Activated CD4-positive, alpha-beta T cell treated with anti-CD3 and anti-CD28 coated beads for 36 hours (primary cell): ENCODE measurements at regions of chr1 and their contacts with region 1.

Region 1: GRCh38 chr1:112715264-112716053 is at the start of gene PPM1J:
- DNase-seq: peak; percentile 97
- ATAC-seq: peak; percentile 84
- H3K4me3 Mint-ChIP-seq: peak within 1 kb of the TSS; percentile 74
- H3K27ac Mint-ChIP-seq: no peak within 1 kb of the TSS
- H3K4me1 Mint-ChIP-seq: peaks cover 14% of the 10 kb centered on the region
- H3K27me3 Mint-ChIP-seq: peaks cover 18% of the 10 kb centered on the region
- total RNA-seq, gene PPM1J: 0.75 to 0.88 TPM

Region 2: DNA sequence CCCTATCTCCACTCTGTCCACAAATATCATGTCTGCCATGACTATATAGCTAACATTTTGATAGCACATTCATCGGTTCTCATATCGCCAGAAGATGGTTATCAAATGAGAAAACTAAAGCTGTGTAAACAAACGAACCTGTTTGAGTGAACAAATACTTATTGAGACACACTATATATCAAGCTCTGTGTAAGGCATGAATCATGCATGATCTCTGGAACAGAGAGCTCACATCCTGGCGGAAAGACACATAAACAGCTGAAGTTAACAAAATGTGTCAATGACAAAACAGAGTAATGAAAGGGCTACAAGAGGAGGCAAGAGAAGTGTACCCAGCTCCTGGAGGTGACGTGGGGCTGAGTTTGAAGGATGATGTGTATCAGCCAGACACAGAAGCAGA is 739.1 kb before region 1 on chr1:
- CTCF ChIA-PET with region 1: no interaction called
- POLR2A ChIA-PET with region 1: no interaction called
- intact Hi-C with region 1: no loop called
- DNase-seq: no peak
- ATAC-seq: no peak
- H3K4me3 Mint-ChIP-seq: no peak overlapping the region
- H3K27ac Mint-ChIP-seq: no peak overlapping the region
- H3K4me1 Mint-ChIP-seq: no peaks in the 10 kb centered on the region
- H3K27me3 Mint-ChIP-seq: peaks cover 53% of the 10 kb centered on the region

Region 3: GRCh38 chr1:112325504-112325903 is 390.0 kb before region 1 on chr1:
- CTCF ChIA-PET with region 1: no interaction called
- POLR2A ChIA-PET with region 1: no interaction called
- intact Hi-C with region 1: no loop called
- DNase-seq: no peak
- ATAC-seq: no peak
- H3K4me3 Mint-ChIP-seq: no peak overlapping the region
- H3K27ac Mint-ChIP-seq: no peak overlapping the region
- H3K4me1 Mint-ChIP-seq: no peaks in the 10 kb centered on the region
- H3K27me3 Mint-ChIP-seq: peaks cover 9% of the 10 kb centered on the region

Region 4: GRCh38 chr1:112674439-112674985 is 40.9 kb before region 1 on chr1 and contains the start of gene MOV10:
- CTCF ChIA-PET with region 1: interaction called, 4 read pairs
- POLR2A ChIA-PET with region 1: no interaction called
- intact Hi-C with region 1: loop called in 1 of 2 experiments (anchors 2 kb)
- DNase-seq: peak; percentile 77
- ATAC-seq: peak; percentile 83
- H3K4me3 Mint-ChIP-seq: peak within 1 kb of the TSS; percentile 88
- H3K27ac Mint-ChIP-seq: peak within 1 kb of the TSS; percentile 92
- H3K4me1 Mint-ChIP-seq: peaks cover 43% of the 10 kb centered on the region
- H3K27me3 Mint-ChIP-seq: no peaks in the 10 kb centered on the region
- total RNA-seq, gene MOV10: 80.3 to 87.5 TPM

Region 5: DNA sequence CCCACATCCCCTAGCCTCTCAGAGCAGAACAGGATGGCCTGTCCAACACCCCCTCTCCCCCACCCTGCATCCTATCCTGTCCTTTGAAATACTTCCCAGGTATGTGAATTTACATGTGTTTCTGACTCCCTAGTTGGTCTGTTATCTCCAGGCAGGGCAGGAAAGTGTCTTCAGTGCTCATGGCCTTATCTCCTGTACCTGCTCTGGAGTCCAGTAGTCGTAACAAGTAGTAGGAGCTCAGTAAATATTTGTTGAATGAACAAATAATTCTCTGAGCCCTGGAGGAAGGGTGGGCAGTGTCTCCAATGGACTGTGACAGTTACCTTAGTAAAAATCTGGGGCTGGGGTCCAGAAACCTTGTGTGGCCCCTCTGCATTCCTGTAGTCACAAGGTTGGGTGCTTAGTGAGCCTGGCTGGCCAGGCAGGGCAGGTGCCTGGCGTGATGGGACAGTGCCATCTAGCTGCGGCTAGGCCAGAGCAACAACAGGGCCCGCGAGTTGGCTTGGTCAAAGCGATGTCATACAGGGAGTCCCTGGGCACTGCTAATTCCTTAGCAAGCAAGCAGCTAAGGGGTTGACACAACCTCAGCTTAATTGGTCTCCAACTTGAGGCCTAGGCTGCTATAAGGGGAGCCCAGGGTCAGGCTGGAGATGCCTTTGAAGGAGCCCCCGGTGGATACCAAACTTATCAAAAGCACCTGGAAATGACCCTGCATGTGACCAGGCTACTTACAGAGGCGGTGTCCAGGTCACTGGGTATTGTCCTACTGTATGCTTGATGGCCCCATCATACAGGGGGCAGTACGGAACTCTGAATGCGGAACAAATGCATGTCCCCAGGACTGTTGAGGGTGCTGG is 88.7 kb after region 1 on chr1:
- CTCF ChIA-PET with region 1: interaction called, 157 read pairs
- POLR2A ChIA-PET with region 1: no interaction called
- intact Hi-C with region 1: loop called (anchors 1 kb)
- DNase-seq: peak; percentile 81
- ATAC-seq: peak; percentile 97
- H3K4me3 Mint-ChIP-seq: no peak overlapping the region
- H3K27ac Mint-ChIP-seq: no peak overlapping the region
- H3K4me1 Mint-ChIP-seq: no peaks in the 10 kb centered on the region
- H3K27me3 Mint-ChIP-seq: peaks cover 5% of the 10 kb centered on the region

Region 6: DNA sequence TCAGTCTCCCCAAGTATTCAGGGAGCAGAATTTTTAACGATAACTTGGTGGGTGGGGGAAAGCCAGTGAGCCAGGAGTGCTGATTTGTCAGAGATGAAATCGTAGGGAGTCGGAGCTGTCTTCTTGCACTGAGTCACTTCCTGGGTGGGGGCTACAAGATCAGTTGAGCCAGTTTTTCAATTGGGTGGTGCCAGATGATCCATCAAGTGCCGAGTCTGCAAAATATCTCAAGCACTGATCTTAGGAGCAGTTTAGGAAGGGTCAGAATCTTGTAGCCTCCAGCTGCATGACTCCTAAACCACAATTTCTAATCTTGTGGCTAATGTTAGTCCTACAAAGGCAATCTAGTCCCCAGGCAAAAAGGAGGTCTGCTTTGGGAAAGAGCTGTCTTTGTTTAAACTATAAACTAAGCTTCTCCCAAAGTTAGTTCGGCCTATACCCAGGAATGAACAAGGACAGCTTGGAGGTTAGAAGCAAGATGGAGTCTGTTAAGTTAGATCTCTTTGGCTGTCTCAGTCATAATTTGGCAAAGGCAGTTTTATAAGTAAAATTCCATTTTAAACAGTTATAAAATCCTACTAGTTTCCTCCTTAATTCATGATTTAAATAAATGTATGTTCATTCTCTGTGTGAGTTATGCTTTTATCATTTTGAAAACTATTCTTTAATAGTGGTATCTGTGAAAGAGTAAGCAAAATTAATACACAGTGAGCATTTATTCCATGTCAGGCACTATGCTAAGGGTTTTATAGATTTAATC is 188.8 kb after region 1 on chr1:
- CTCF ChIA-PET with region 1: no interaction called
- POLR2A ChIA-PET with region 1: interaction called, 3 read pairs
- intact Hi-C with region 1: loop called in 1 of 2 experiments (anchors 1 kb)
- DNase-seq: peak; percentile 80
- ATAC-seq: peak; percentile 96
- H3K4me3 Mint-ChIP-seq: no peak overlapping the region
- H3K27ac Mint-ChIP-seq: peak overlapping the region; percentile 83
- H3K4me1 Mint-ChIP-seq: peaks cover 41% of the 10 kb centered on the region
- H3K27me3 Mint-ChIP-seq: no peaks in the 10 kb centered on the region

Region 7: DNA sequence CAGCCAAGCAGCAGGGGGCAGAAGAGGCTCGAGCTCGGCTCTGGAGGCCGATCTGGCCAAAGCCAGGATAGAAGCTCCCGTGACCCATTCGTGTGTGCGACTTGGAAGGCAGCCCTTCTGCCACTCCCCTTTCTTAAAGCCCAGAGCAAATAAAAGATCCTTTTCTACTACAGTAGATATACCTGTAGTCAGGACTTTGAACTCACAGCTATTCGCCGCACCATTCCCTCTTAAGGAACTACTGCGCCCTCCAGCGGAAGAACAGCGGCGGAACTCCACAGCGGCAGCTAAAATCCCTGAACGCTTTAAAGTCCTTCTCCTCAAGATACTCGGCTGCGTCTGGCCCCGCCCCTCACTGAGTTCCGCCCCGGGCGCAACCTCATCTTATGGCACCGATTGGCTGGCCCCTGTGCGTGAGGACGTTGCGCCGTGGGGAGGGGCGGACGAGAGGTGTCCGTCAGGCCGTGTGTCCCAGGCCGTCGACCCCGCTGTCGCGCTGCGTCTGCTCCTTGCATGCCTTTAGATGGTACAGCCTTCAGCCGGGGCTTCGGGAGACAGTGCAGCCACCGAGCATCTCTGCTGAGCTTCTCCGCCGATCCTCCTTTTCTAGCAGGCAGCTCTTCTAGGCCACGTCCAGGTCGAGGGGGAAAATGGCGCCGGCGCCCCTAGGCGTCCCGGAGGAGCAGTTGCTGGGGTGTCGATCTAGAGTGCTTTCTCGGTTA is 357.5 kb after region 1 on chr1 and contains the start of gene LRIG2:
- CTCF ChIA-PET with region 1: interaction called, 27 read pairs
- POLR2A ChIA-PET with region 1: no interaction called
- intact Hi-C with region 1: loop called (anchors 2 kb)
- DNase-seq: peak; percentile 99
- ATAC-seq: peak; percentile 98
- H3K4me3 Mint-ChIP-seq: peak within 1 kb of the TSS; percentile 98
- H3K27ac Mint-ChIP-seq: peak within 1 kb of the TSS; percentile 90
- H3K4me1 Mint-ChIP-seq: peaks cover 29% of the 10 kb centered on the region
- H3K27me3 Mint-ChIP-seq: no peaks in the 10 kb centered on the region
- total RNA-seq, gene LRIG2: 7.1 to 10.2 TPM

Region 8: GRCh38 chr1:113677250-113678158 is 962.0 kb after region 1 on chr1:
- CTCF ChIA-PET with region 1: no interaction called
- POLR2A ChIA-PET with region 1: no interaction called
- intact Hi-C with region 1: loop called (anchors 2 kb)
- DNase-seq: no peak
- ATAC-seq: peak; percentile 39
- H3K4me3 Mint-ChIP-seq: no peak overlapping the region
- H3K27ac Mint-ChIP-seq: no peak overlapping the region
- H3K4me1 Mint-ChIP-seq: no peaks in the 10 kb centered on the region
- H3K27me3 Mint-ChIP-seq: no peaks in the 10 kb centered on the region